PC-9 (cell line): ENCODE measurements at regions of chr5 and their contacts with region 1.

Region 1: GRCh38 chr5:157476702-157477408 is 16.8 kb downstream of the NIPAL4 start:
- DNase-seq: peak; percentile 47 to 50
- H3K4me3 ChIP-seq: no peak overlapping the region
- H3K27ac ChIP-seq: no peak overlapping the region
- H3K4me1 ChIP-seq: peaks cover 26% of the 10 kb centered on the region
- H3K27me3 ChIP-seq: no peaks in the 10 kb centered on the region
- CTCF ChIP-seq: peak; percentile 89

Region 2: DNA sequence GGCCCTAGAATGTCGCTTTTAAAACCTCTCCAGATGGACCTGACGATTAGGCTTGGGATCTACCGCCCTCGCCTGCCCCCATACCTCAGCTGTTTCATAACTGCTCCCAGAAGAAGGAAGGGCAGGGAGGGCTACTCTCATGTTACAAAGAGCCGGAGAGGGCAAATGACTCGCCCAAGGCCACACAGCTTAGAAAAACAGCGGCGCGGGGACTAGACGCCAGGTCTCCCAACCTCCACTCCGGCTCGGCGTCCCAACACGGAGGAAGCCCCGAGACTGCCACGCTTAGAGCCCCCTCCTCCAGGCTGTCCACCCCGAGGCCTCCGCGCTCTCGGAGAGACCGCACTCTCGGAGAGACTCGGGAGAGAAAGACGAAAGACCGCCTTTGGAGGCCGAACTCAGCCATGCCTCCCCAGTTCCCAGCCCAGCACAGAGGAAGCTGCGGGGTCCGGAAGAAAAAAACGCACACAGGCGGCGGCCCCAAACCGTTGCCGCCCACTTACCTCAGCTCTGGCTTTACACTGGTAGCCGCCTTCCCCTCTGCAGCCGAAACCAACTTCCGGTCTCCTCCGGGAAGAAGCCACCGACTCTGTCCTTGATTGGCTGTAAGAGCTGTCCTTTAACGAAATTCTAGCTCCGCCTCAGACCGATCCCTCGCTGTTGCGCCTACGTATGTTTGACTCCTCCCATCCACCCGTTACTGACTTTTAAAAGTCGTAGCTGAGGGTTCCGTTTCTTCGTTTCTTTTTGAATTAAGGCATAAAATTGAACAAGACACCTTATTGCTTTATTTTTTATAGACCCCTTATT is 334.3 kb before region 1 on chr5 and contains the start of gene MED7:
- CTCF ChIA-PET with region 1: no interaction called
- POLR2A ChIA-PET with region 1: no interaction called
- intact Hi-C with region 1: loop called (anchors 10 kb)
- DNase-seq: peak; percentile 93
- H3K4me3 ChIP-seq: peak within 1 kb of the TSS; percentile 69
- H3K27ac ChIP-seq: peak within 1 kb of the TSS; percentile 57
- H3K4me1 ChIP-seq: peaks cover 11% of the 10 kb centered on the region
- H3K27me3 ChIP-seq: peaks cover 5% of the 10 kb centered on the region; the same call in 1 of the 2 replicates
- CTCF ChIP-seq: no peak
- total RNA-seq, gene MED7: 9.4 and 11.8 TPM in 2 replicates

Region 3: GRCh38 chr5:157245886-157246285 is 231.0 kb before region 1 on chr5:
- CTCF ChIA-PET with region 1: no interaction called
- POLR2A ChIA-PET with region 1: no interaction called
- intact Hi-C with region 1: no loop called
- DNase-seq: no peak
- H3K4me3 ChIP-seq: no peak overlapping the region
- H3K27ac ChIP-seq: no peak overlapping the region
- H3K4me1 ChIP-seq: no peaks in the 10 kb centered on the region
- H3K27me3 ChIP-seq: peaks cover 26% of the 10 kb centered on the region; the same call in 1 of the 2 replicates
- CTCF ChIP-seq: no peak

Region 4: DNA sequence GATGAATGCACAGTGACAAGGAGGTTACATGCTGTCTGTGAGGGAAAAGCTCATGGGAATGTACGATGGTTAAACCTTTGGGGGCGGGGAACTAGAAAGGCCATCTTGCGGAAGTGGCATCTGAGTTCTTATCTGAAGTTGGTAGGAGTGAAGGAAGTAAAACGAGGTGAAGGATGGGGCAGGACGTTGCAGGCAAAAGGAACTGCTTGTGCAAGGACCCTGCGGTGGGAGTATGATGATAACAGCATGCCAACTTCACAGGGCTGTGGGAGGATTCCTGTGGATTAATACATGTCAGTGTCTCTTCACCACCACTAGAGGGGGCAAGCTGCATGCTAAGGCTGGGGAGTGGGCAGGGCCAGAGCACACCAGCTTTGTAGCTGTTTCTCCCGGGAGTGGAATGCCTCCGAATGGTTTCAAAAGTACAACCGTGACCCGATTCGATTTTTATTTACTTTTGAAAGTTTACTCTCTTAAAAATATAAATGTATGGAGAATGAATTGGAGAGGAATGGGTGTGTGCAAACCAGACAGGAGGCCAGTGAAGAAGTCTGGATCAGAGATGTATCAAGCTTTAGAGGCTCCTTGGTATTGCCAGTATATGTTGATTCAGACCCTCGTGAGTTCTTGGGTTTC is 148.5 kb before region 1 on chr5:
- CTCF ChIA-PET with region 1: interaction called, 11 read pairs
- POLR2A ChIA-PET with region 1: no interaction called
- intact Hi-C with region 1: loop called (anchors 1 kb)
- DNase-seq: peak; percentile 50 to 61
- H3K4me3 ChIP-seq: peak overlapping the region; percentile 46; the same call in 1 of the 2 replicates
- H3K27ac ChIP-seq: no peak overlapping the region
- H3K4me1 ChIP-seq: 0 out of 2 replicates have a peak, but pooled peaks cover 4% of the 10 kb centered on the region
- H3K27me3 ChIP-seq: 0 out of 2 replicates have a peak, but pooled peaks cover 5% of the 10 kb centered on the region
- CTCF ChIP-seq: peak; percentile 91

Region 5: GRCh38 chr5:157366741-157367674 is 109.8 kb before region 1 on chr5:
- CTCF ChIA-PET with region 1: interaction called, 3 read pairs
- POLR2A ChIA-PET with region 1: no interaction called
- intact Hi-C with region 1: loop called (anchors 1 kb)
- DNase-seq: no peak
- H3K4me3 ChIP-seq: no peak overlapping the region
- H3K27ac ChIP-seq: no peak overlapping the region
- H3K4me1 ChIP-seq: no peaks in the 10 kb centered on the region
- H3K27me3 ChIP-seq: no peaks in the 10 kb centered on the region
- CTCF ChIP-seq: peak; percentile 67

Region 6: DNA sequence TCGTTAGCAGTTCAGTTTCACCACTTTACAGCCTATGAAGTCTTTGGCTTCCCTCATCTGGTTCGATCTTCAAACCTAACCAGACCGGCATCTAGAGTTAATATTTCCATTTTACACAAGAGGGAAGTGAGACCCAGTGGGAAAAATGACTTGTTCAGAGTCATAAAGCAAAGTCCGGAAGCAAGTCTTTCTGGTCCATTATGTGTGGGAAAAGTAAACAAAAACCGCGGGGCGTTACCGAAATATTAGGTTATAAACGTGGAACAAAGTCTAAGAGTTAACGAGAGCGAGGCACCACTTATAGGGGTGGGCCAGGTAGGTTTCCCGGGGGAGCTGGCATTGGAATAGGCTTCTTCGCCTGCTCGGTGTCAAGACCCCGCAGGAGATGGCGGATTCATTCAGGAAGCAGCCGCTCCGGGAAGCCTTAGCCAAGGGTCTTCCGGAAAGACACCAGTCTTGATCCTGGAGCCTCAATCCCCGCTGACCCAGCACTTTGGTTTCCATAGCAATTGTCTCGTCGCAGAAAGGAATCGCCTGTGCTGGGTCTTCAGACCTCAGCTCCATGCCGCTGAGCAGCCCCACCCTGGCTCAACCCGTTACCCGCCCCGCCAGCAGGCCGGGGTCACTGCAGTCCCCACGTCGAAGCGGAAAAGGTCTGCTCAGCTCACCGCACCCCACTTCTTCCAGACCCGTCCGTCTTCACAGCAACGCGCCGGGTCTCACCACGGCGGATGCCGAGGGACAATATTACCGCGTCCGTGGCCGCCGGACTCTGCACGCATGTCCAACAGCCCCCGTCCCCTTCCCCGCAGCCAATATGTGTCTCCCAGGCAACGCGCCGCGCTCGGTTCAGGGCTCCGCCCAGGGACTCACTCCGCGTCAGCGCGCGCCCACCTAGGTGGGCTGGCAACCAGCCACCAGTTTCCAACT is 194.1 kb after region 1 on chr5 and contains the start of gene C5orf52:
- CTCF ChIA-PET with region 1: interaction called, 22 read pairs
- POLR2A ChIA-PET with region 1: no interaction called
- intact Hi-C with region 1: no loop called
- DNase-seq: no peak
- H3K4me3 ChIP-seq: no peak within 1 kb of the TSS
- H3K27ac ChIP-seq: no peak within 1 kb of the TSS
- H3K4me1 ChIP-seq: peaks cover 3% of the 10 kb centered on the region
- H3K27me3 ChIP-seq: no peaks in the 10 kb centered on the region
- CTCF ChIP-seq: no peak
- total RNA-seq, gene C5orf52: not detected in 2 replicates

Region 7: DNA sequence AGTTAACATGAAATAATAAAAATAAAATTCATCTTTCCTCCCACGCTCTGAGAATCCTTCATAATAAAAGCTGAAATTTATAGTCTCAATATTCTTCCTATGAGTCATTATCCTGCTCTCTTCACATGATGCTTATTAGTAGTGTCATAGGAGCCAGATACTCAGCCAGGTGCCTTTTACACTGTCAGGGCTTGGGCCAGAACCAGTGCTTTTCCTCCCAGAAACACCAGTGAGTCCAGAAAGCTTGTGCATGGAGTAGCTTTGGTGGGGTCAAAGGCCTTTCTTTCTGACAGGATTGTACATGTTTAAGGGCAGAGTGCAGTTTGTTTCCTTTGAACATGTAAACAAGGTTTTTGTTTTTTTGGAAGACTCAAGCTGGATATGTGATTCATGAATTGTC is 273.5 kb after region 1 on chr5:
- CTCF ChIA-PET with region 1: interaction called, 14 read pairs
- POLR2A ChIA-PET with region 1: no interaction called
- intact Hi-C with region 1: no loop called
- DNase-seq: no peak
- H3K4me3 ChIP-seq: no peak overlapping the region
- H3K27ac ChIP-seq: no peak overlapping the region
- H3K4me1 ChIP-seq: no peaks in the 10 kb centered on the region
- H3K27me3 ChIP-seq: no peaks in the 10 kb centered on the region
- CTCF ChIP-seq: no peak